ENCODE measurements at regions of chr6 and their contacts with region 1.

Region 1: DNA sequence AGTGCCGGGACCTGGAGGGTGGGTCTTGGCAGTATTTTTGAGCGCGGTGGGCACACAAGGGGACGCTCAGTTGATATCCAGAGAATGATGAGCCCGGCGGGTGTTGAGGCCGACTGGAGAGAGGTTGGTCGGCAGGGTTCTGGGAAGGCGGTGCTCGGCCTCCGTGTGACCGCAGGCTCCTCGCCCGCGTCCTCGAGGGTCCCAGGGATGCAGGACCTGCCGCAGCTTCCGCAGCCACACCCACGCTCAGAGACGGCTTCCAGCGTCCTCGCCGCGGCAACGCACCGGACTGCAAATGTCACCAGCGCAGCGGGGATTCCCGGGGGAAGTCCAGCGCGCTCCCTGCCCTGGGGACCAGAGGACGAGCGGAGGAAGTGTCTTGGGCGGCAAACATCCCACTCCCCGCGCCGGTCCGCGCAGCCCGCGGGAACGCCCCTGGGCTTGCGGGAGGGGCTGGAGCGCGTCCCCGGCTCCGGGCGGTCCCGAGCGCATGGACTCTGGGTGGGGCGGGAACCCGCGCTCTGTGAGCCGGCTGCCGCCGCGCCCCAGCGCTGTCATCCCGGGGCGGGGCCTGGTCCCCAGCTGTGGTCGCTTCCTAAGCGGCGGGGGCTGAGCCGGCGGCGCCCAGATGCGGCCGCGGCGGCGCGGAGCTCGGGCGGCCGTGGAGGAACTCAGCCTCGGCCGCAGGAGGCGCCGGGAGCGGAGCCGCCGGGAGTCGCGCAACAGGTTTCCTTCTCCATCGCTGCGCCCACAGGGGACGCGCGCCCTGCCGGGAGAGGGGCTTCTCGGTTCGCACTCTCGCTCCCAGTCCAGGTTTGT is at the start of gene STX11:
- DNase-seq: peak; percentile 84
- ATAC-seq: peak; percentile 72
- H3K4me3 Mint-ChIP-seq: peak within 1 kb of the TSS; percentile 92
- H3K27ac Mint-ChIP-seq: peak within 1 kb of the TSS; percentile 96
- H3K4me1 Mint-ChIP-seq: peaks cover 46% of the 10 kb centered on the region
- H3K27me3 Mint-ChIP-seq: no peaks in the 10 kb centered on the region
- CTCF ChIP-seq: no peak
- total RNA-seq, gene STX11: 23.3 and 26.4 TPM in 2 replicates

Region 2: GRCh38 chr6:142613981-142614380 is 1536.1 kb before region 1 on chr6:
- CTCF ChIA-PET with region 1: no interaction called
- POLR2A ChIA-PET with region 1: no interaction called
- intact Hi-C with region 1: no loop called
- DNase-seq: no peak
- ATAC-seq: no peak
- H3K4me3 Mint-ChIP-seq: no peak overlapping the region
- H3K27ac Mint-ChIP-seq: no peak overlapping the region
- H3K4me1 Mint-ChIP-seq: no peaks in the 10 kb centered on the region
- H3K27me3 Mint-ChIP-seq: peaks cover 5% of the 10 kb centered on the region
- CTCF ChIP-seq: no peak

Region 3: GRCh38 chr6:144063744-144064401 is 86.2 kb before region 1 on chr6:
- CTCF ChIA-PET with region 1: no interaction called
- POLR2A ChIA-PET with region 1: interaction called, 8 read pairs
- intact Hi-C with region 1: loop called (anchors 1 kb)
- DNase-seq: peak; percentile 91
- ATAC-seq: peak; percentile 93
- H3K4me3 Mint-ChIP-seq: peak overlapping the region; percentile 94
- H3K27ac Mint-ChIP-seq: peak overlapping the region; percentile 89
- H3K4me1 Mint-ChIP-seq: peaks cover 36% of the 10 kb centered on the region
- H3K27me3 Mint-ChIP-seq: no peaks in the 10 kb centered on the region
- CTCF ChIP-seq: no peak

Region 4: GRCh38 chr6:144104898-144105487 is 45.1 kb before region 1 on chr6:
- CTCF ChIA-PET with region 1: interaction called, 4 read pairs
- POLR2A ChIA-PET with region 1: interaction called, 8 read pairs
- intact Hi-C with region 1: loop called (anchors 1 kb)
- DNase-seq: no peak
- ATAC-seq: peak; percentile 95
- H3K4me3 Mint-ChIP-seq: no peak overlapping the region
- H3K27ac Mint-ChIP-seq: no peak overlapping the region
- H3K4me1 Mint-ChIP-seq: no peaks in the 10 kb centered on the region
- H3K27me3 Mint-ChIP-seq: no peaks in the 10 kb centered on the region
- CTCF ChIP-seq: no peak

Region 5: GRCh38 chr6:144284783-144285547 is 134.9 kb after region 1 on chr6 and contains the start of gene UTRN:
- CTCF ChIA-PET with region 1: no interaction called
- POLR2A ChIA-PET with region 1: no interaction called
- intact Hi-C with region 1: loop called (anchors 2 kb)
- DNase-seq: peak; percentile 44
- ATAC-seq: peak; percentile 54
- H3K4me3 Mint-ChIP-seq: peak within 1 kb of the TSS; percentile 94
- H3K27ac Mint-ChIP-seq: no peak within 1 kb of the TSS
- H3K4me1 Mint-ChIP-seq: peaks cover 19% of the 10 kb centered on the region
- H3K27me3 Mint-ChIP-seq: peaks cover 6% of the 10 kb centered on the region
- CTCF ChIP-seq: no peak
- total RNA-seq, gene UTRN: 52.2 and 53.5 TPM in 2 replicates

Region 6: DNA sequence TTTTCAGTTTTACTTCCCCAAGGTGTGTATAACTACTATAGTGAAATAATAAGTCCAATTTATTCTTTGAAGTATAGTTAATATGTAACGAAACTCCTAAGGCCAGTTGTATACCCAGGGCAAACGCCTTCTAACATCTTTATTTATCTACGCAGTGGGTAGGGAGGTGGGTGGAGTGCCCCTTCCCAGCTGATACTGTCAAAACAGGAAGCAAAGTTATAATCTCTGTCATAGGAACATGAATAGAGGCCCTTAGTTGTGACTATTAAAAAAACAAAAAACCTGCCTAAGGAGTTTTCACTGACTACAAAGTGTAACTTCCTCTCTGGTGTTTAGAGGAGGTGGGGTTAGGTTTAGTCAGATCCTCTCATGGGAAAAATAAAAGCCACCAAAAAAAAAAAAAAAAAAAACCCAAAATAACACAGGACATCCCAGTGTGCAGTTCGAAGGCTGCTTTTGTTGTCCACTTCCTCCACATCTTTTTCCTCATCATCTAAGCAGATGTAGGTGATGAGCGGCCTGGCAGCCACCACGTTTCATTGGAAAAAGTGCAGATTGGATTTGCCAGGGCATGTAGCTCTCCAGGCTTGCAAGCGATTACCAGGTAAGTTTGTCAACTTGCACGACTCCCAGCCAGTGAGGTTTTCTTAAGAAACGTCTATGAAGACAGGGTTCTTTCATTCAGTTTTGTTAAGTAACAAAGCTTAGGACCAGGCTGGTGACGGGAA is 193.8 kb after region 1 on chr6:
- CTCF ChIA-PET with region 1: interaction called, 3 read pairs
- POLR2A ChIA-PET with region 1: interaction called, 3 read pairs
- intact Hi-C with region 1: loop called (anchors 1 kb)
- DNase-seq: no peak
- ATAC-seq: peak; percentile 80
- H3K4me3 Mint-ChIP-seq: peak overlapping the region; percentile 93
- H3K27ac Mint-ChIP-seq: peak overlapping the region; percentile 97
- H3K4me1 Mint-ChIP-seq: peaks cover 98% of the 10 kb centered on the region
- H3K27me3 Mint-ChIP-seq: no peaks in the 10 kb centered on the region
- CTCF ChIP-seq: no peak

Region 7: GRCh38 chr6:145963216-145964068 is 1813.3 kb after region 1 on chr6:
- CTCF ChIA-PET with region 1: no interaction called
- POLR2A ChIA-PET with region 1: no interaction called
- intact Hi-C with region 1: loop called (anchors 10 kb)
- DNase-seq: peak; percentile 44
- ATAC-seq: peak; percentile 4
- H3K4me3 Mint-ChIP-seq: peak overlapping the region; percentile 99
- H3K27ac Mint-ChIP-seq: peak overlapping the region; percentile 96
- H3K4me1 Mint-ChIP-seq: peaks cover 45% of the 10 kb centered on the region
- H3K27me3 Mint-ChIP-seq: no peaks in the 10 kb centered on the region
- CTCF ChIP-seq: no peak

Measured in activated B cell treated with CpG ODN at 0.5 μM for 24 hours (primary cell).